ENCODE measurements at regions of chr14 and their contacts with region 1.

Region 1: DNA sequence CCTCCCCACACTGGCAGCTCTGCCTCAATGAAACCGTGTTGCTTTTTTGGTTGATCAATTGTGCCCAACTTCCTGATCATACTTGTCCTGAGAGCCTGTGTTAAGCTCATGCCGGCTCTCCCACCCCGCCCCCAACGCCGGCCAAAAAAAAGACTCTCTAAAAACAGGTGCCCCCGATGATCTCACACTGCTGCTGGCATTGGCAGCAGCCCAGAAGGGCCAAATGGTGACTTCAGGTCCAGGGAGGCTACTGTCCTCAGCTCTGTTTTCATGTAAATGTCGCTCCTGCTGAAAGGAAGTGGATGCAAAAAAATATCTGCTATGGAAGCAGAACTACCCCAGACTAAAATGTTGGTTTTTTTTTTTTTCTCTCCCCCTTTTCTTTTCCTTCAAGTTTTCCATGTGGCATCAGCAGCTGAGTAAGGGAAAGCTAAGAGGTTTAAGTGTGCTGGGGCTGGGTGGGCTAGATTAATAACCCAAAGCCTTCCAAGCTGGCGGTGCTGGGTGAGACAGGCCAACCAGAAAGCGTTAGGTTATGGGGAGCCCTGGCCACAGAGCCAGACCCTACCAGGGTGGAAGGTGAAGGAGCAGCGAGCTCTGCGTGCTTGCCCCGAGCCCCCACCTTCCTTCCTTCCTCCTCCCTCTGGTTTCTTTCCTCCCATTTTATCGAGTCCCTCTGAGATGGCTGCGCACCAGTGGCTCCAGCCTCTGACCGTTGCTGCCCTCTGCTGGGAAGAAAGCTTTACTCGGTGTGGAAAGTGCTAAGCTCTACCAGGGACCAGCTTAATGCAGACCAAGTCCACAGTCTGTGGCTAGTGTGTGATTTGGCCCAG is 396.1 kb downstream of the NRXN3 start:
- DNase-seq: peak; percentile 39 to 70
- ATAC-seq: peak; percentile 97
- H3K4me3 ChIP-seq: peak overlapping the region; percentile 42 to 49 (median 46)
- H3K27ac ChIP-seq: peak overlapping the region in 3 of 4 donors; percentile 31 to 42 (median 41)
- H3K4me1 ChIP-seq: peaks cover 4 to 7% of the 10 kb centered on the region in 2 donors
- H3K27me3 ChIP-seq: no peaks in the 10 kb centered on the region
- CTCF ChIP-seq: peak; percentile 52 to 80 (median 72)
- POLR2A ChIP-seq: no peak

Region 2: GRCh38 chr14:77862154-77862786 is 704.0 kb before region 1 on chr14:
- in situ Hi-C with region 1: loop called in 3 of 4 experiments (anchors 25 kb)
- intact Hi-C with region 1: loop called (anchors 5 kb)
- DNase-seq: peak; percentile 23 to 52
- ATAC-seq: peak; percentile 45 to 64
- H3K4me3 ChIP-seq: no peak overlapping the region
- H3K27ac ChIP-seq: no peak overlapping the region
- H3K4me1 ChIP-seq: no peaks in the 10 kb centered on the region
- H3K27me3 ChIP-seq: no peaks in the 10 kb centered on the region
- CTCF ChIP-seq: peak; percentile 74 to 95 (median 85)
- POLR2A ChIP-seq: no peak

Region 3: DNA sequence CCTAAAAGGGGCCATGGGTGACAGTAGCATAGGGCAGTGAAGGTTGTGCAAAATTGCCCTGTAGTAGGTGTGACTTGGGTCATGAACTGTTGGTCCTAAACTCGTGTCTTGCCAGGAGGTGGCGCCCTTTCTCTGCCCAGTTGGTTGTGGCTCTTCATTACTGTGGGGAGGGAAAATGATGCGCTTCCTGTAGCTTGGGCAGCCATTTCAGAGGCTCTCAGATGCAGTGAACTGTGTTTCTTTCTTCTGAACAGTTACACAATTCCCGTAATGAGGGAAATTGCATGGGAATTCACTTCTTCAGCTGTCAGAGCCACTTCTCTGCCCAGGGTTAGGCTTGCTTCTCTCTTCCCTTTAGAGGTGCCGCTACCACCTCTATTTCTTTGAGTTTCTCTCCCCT is 544.2 kb before region 1 on chr14:
- in situ Hi-C with region 1: no loop called
- intact Hi-C with region 1: loop called (anchors 5 kb)
- DNase-seq: peak in 1 of 2 donors; percentile 33
- ATAC-seq: peak in 1 of 2 donors; percentile 55
- H3K4me3 ChIP-seq: no peak overlapping the region
- H3K27ac ChIP-seq: no peak overlapping the region
- H3K4me1 ChIP-seq: no peaks in the 10 kb centered on the region
- H3K27me3 ChIP-seq: no peaks in the 10 kb centered on the region
- CTCF ChIP-seq: peak in 3 of 5 experiments; percentile 12 to 36 (median 24)
- POLR2A ChIP-seq: no peak

Region 4: GRCh38 chr14:78448164-78449094 is 117.8 kb before region 1 on chr14:
- in situ Hi-C with region 1: loop called in 3 of 4 experiments (anchors 10 kb)
- intact Hi-C with region 1: loop called (anchors 1 kb)
- DNase-seq: peak in 1 of 2 donors; percentile 25
- ATAC-seq: peak in 1 of 2 donors; percentile 64
- H3K4me3 ChIP-seq: no peak overlapping the region
- H3K27ac ChIP-seq: no peak overlapping the region
- H3K4me1 ChIP-seq: no peaks in the 10 kb centered on the region
- H3K27me3 ChIP-seq: no peaks in the 10 kb centered on the region
- CTCF ChIP-seq: peak; percentile 55 to 78 (median 71)
- POLR2A ChIP-seq: no peak

Region 5: GRCh38 chr14:78455896-78456435 is 110.3 kb before region 1 on chr14:
- in situ Hi-C with region 1: loop called in 1 of 4 experiments (anchors 10 kb)
- intact Hi-C with region 1: no loop called
- DNase-seq: no peak
- ATAC-seq: no peak
- H3K4me3 ChIP-seq: no peak overlapping the region
- H3K27ac ChIP-seq: no peak overlapping the region
- H3K4me1 ChIP-seq: no peaks in the 10 kb centered on the region
- H3K27me3 ChIP-seq: no peaks in the 10 kb centered on the region
- CTCF ChIP-seq: no peak
- POLR2A ChIP-seq: no peak

Region 6: DNA sequence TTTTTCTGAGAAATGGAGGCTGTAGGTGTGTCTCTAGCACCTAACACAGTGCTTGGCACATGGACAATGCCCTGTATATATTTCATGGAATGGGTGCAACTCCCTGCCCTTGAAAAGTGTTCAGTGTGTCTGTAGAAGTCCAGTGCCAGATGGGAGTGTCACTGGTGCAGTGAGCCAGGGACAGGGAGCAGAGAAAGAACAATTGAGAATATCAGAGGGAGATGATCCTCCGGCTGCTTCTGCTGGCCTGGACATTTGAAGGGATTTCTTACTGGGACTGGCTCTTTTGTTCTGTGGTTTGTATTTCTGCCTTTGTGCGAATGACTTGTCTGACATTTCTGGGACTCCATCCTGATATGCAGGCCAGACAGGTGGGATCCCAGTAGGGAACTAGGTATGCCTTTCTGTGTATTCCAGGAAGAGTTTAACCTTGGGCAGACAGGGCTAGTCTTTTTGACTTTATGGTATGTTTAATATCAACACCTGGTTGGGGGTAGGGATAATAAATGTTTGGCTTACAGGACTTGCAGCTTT is 68.1 kb before region 1 on chr14:
- in situ Hi-C with region 1: no loop called
- intact Hi-C with region 1: no loop called
- DNase-seq: no peak
- ATAC-seq: no peak
- H3K4me3 ChIP-seq: no peak overlapping the region
- H3K27ac ChIP-seq: no peak overlapping the region
- H3K4me1 ChIP-seq: no peaks in the 10 kb centered on the region
- H3K27me3 ChIP-seq: no peaks in the 10 kb centered on the region
- CTCF ChIP-seq: no peak
- POLR2A ChIP-seq: no peak

Region 7: GRCh38 chr14:78598041-78598920 is 32.0 kb after region 1 on chr14:
- in situ Hi-C with region 1: no loop called
- intact Hi-C with region 1: loop called (anchors 2 kb)
- DNase-seq: peak; percentile 7 to 28
- ATAC-seq: peak; percentile 73 to 79
- H3K4me3 ChIP-seq: no peak overlapping the region
- H3K27ac ChIP-seq: no peak overlapping the region
- H3K4me1 ChIP-seq: no peaks in the 10 kb centered on the region
- H3K27me3 ChIP-seq: no peaks in the 10 kb centered on the region
- CTCF ChIP-seq: peak; percentile 72 to 88 (median 79)
- POLR2A ChIP-seq: no peak